ENCODE measurements at regions of chr4 and their contacts with region 1.

Region 1: DNA sequence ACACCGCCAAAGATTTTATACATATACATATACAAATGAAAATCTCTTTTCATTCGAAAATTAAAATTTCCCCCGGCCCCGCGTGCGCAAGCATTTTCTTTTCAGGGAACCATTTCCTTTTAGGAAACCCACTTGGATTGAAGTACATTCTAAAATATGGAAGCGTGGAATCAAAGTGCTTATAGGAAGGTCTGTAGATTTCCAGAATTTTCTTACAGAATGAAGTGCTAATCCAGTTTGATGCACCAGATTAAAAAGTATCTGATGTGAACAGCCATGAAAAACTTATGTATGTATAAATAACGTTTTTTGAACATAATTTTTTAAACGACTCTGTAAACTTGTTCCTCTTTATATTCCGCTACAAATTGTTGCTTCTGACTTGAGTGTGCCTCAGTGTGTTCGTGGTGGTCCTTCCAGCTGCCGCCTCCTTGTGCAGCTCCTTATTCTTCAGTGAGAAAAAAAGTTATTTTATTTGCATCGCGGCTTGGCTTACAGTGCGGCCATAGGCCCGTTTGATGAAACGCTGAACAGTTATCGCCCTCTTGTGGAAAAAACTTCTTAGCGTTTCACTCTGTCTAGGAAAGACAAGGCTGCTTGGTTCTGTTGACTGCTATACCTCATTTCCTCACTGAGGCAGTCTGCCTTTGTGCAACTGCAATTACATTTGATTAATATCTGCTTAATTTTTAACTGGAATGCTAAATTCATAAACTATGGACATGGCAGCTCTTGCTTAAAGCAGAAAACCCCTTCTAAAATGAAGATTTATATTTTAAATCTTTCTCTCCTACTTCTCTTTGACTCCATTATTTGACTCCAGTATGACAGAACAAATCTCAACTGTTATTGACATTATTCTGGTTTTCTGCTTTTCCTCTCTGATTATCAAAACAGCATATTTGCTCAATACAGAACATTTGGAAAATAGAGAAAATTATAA is 4.7 kb upstream of the NKX6-1 start:
- DNase-seq: peak; percentile 43
- H3K4me3 Mint-ChIP-seq: no peak overlapping the region
- H3K27ac Mint-ChIP-seq: peak overlapping the region; percentile 63
- H3K4me1 Mint-ChIP-seq: peaks cover 14% of the 10 kb centered on the region
- H3K27me3 Mint-ChIP-seq: peaks cover 76% of the 10 kb centered on the region

Region 2: GRCh38 chr4:83174844-83175414 is 1328.8 kb before region 1 on chr4:
- CTCF ChIA-PET with region 1: no interaction called
- intact Hi-C with region 1: no loop called
- DNase-seq: no peak
- H3K4me3 Mint-ChIP-seq: no peak overlapping the region
- H3K27ac Mint-ChIP-seq: no peak overlapping the region
- H3K4me1 Mint-ChIP-seq: peaks cover 6% of the 10 kb centered on the region
- H3K27me3 Mint-ChIP-seq: no peaks in the 10 kb centered on the region

Region 3: GRCh38 chr4:83771113-83771705 is 732.6 kb before region 1 on chr4:
- CTCF ChIA-PET with region 1: no interaction called
- intact Hi-C with region 1: loop called (anchors 2 kb)
- DNase-seq: peak; percentile 28
- H3K4me3 Mint-ChIP-seq: no peak overlapping the region
- H3K27ac Mint-ChIP-seq: no peak overlapping the region
- H3K4me1 Mint-ChIP-seq: no peaks in the 10 kb centered on the region
- H3K27me3 Mint-ChIP-seq: peaks cover 11% of the 10 kb centered on the region

Region 4: GRCh38 chr4:84481860-84482245 is 21.9 kb before region 1 on chr4:
- CTCF ChIA-PET with region 1: interaction called, 3 read pairs
- intact Hi-C with region 1: loop called (anchors 1 kb)
- DNase-seq: peak; percentile 30
- H3K4me3 Mint-ChIP-seq: no peak overlapping the region
- H3K27ac Mint-ChIP-seq: no peak overlapping the region
- H3K4me1 Mint-ChIP-seq: peaks cover 18% of the 10 kb centered on the region
- H3K27me3 Mint-ChIP-seq: peaks cover 79% of the 10 kb centered on the region

Region 5: DNA sequence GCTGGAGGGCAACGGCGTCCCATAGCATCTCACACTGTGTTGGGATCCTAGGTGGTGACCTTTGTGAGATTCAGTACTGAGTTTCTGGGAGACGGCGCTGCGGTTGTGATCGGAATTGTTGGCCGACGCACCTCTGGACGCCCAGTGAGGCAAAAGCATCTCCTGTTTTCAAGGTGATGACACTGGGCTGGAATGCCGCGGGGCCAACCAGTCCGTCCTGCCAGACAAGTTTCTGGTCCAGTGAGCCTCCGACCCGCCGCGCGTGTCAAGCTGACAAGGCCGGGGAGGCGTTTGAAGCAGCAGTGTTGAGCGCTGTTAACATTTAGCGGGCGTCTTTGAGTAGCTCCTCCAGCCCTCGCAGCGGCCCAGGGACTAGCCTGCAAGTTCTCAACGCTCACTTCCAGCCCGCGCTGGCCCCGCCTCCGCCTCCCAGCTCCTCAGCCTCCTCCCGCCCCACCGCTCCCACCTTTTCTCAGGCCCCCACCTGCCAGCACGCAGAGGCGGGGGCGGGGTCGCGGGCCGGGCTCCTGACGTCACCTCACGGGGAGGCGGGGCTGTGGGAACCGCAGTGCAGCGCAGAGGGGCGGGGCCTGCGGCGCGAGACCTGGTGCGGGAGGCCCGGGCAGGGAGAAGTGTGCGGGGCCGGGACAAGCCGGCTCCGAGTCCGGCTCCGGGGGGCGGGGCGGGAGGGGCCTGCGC is 78.7 kb after region 1 on chr4:
- CTCF ChIA-PET with region 1: no interaction called
- intact Hi-C with region 1: loop called (anchors 2 kb)
- DNase-seq: peak; percentile 95
- H3K4me3 Mint-ChIP-seq: peak overlapping the region; percentile 69
- H3K27ac Mint-ChIP-seq: no peak overlapping the region
- H3K4me1 Mint-ChIP-seq: peaks cover 12% of the 10 kb centered on the region
- H3K27me3 Mint-ChIP-seq: peaks cover 34% of the 10 kb centered on the region

Region 6: GRCh38 chr4:84596826-84597225 is 93.1 kb after region 1 on chr4:
- CTCF ChIA-PET with region 1: no interaction called
- intact Hi-C with region 1: no loop called
- DNase-seq: peak; percentile 43
- H3K4me3 Mint-ChIP-seq: no peak overlapping the region
- H3K27ac Mint-ChIP-seq: no peak overlapping the region
- H3K4me1 Mint-ChIP-seq: peaks cover 7% of the 10 kb centered on the region
- H3K27me3 Mint-ChIP-seq: peaks cover 1% of the 10 kb centered on the region

Measured in activated naive CD4-positive, alpha-beta T cell treated with anti-CD3 and anti-CD28 coated beads for 36 hours (primary cell).